ENCODE measurements at regions of chr11 and their contacts with region 1.

Region 1: DNA sequence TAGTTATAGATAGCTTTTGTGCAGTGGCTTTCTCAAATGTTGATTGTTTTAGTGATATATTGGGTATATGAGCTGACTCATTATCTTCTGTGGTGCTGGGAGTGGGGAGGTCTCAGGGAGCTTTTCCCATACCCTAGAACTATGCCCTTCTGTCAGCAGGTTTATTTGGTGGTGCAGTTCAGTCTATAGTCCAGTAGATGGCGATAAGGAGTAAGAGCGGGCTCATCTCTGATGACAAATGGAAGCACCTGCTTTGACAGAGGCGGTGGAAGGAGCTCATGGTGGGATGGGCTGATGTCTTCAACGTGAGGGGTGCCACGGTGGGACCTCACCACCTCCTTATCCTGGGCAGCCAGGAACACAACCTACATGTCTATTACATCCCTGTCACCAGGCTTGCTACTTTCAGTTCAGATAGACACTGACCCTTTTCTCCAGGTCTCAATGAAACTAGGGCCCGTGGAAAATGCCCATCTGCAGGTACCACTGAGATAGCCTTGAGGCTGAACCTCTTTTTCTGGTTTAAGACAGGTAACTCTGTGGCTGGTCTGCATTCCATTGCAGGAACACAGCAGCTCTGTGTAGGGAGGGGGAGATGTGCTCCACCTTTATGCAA is 13.0 kb upstream of the OR6A2 start:
- DNase-seq: no peak
- ATAC-seq: peak in 3 of 8 donors; percentile 33 to 59 (median 35)
- H3K4me3 ChIP-seq: no peak overlapping the region
- H3K27ac ChIP-seq: no peak overlapping the region
- H3K4me1 ChIP-seq: no peaks in the 10 kb centered on the region
- H3K27me3 ChIP-seq: peaks cover 0 to 27% (median 3%) of the 10 kb centered on the region in 7 donors
- CTCF ChIP-seq: peak; percentile 53 to 87 (median 81)

Region 2: GRCh38 chr11:6778518-6778917 is 34.0 kb before region 1 on chr11:
- intact Hi-C with region 1: no loop called
- DNase-seq: no peak
- ATAC-seq: no peak
- H3K4me3 ChIP-seq: no peak overlapping the region
- H3K27ac ChIP-seq: no peak overlapping the region
- H3K4me1 ChIP-seq: no peaks in the 10 kb centered on the region
- H3K27me3 ChIP-seq: peaks cover 0 to 5% (median 0%) of the 10 kb centered on the region in 7 donors
- CTCF ChIP-seq: no peak

Region 3: DNA sequence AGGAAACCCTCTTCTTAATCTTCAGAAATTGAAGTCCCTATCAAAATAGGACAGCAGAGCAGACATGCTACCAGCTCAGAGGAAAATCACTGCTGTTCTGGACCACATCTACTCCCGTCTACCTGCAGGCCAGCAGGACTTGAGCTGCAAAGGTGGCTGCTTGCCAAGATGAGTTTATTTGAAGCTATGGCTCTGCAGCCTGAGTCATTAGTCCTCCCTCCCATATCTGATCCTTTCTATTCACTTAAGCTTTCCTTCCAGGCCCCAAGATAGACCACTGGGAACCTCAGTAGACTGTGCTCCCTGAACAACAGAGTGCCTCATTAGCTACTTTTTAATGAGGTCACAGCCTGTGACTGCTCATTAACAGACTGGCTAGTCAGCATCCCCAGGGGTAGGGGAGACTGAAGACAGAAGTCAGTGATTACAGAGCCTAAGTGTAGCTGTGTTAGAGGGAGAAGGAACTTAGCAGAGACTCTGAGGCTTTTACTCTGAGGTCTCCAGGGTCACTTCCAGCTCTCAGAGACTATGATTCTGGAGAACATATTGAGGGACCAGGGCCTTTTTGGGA is 43.6 kb after region 1 on chr11:
- intact Hi-C with region 1: no loop called
- DNase-seq: no peak
- ATAC-seq: no peak
- H3K4me3 ChIP-seq: no peak overlapping the region
- H3K27ac ChIP-seq: no peak overlapping the region
- H3K4me1 ChIP-seq: no peaks in the 10 kb centered on the region
- H3K27me3 ChIP-seq: no peaks in the 10 kb centered on the region
- CTCF ChIP-seq: no peak

Region 4: GRCh38 chr11:7688238-7688826 is 875.8 kb after region 1 on chr11:
- intact Hi-C with region 1: loop called in 1 of 10 experiments (anchors 5 kb)
- DNase-seq: no peak
- ATAC-seq: no peak
- H3K4me3 ChIP-seq: no peak overlapping the region
- H3K27ac ChIP-seq: no peak overlapping the region
- H3K4me1 ChIP-seq: no peaks in the 10 kb centered on the region
- H3K27me3 ChIP-seq: peaks cover 0 to 24% (median 6%) of the 10 kb centered on the region in 7 donors
- CTCF ChIP-seq: peak; percentile 41 to 82 (median 75)

Measured in heart right ventricle (tissue), 16 donors.